ENCODE measurements at regions of chr19 and their contacts with region 1.

Region 1: DNA sequence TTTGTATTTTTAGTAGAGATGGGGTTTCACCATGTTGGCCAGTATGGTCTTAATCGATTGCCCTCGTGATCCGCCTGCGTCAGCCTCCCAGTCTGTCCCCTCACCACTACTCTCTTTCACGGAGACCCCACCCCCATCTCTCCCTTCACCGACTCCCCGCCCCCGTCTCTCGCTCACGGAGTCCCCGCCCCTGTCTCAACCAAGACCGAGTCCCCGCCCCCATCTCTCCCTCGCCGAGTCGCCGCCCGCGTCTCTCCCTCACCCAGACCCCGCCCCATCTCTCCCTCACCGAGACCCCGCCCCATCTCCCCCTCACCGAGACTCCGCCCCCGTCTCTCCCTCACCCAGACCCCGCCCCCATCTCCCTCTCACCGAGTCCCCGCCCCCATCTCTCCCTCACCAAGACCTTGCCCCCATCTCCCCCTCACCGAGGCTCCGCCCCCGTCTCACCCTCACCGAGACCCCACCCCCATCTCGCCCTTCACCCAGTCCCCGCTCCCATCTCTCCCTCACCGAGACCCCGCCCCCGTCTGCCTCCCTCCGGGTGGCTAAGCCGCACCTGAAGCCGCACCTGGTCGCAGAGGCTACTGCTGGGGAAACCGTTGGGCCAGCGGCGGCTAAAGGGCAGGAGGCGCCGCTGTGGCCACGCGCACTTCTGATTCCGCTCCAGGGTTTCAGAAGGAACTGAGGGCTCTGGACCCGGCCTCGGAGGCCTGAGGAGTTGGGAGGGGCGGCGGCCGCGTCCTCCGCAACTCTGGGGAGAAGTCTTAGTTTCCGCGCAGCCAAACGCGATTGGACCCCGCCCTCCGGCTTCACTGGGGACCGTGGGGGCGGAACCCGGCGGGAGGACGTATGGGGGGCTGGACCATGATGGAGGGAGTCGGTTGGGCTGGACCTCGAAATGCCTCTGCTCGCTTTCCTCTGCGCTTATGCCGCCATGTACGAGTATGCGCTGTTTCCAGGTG is 17.1 kb upstream of the ZNF846 start:
- DNase-seq: peak; percentile 92 to 96
- H3K4me3 ChIP-seq: peak overlapping the region; percentile 62
- H3K27ac ChIP-seq: peak overlapping the region; percentile 83
- H3K4me1 ChIP-seq: peaks cover 18% of the 10 kb centered on the region
- H3K27me3 ChIP-seq: no peaks in the 10 kb centered on the region
- CTCF ChIP-seq: no peak

Region 2: DNA sequence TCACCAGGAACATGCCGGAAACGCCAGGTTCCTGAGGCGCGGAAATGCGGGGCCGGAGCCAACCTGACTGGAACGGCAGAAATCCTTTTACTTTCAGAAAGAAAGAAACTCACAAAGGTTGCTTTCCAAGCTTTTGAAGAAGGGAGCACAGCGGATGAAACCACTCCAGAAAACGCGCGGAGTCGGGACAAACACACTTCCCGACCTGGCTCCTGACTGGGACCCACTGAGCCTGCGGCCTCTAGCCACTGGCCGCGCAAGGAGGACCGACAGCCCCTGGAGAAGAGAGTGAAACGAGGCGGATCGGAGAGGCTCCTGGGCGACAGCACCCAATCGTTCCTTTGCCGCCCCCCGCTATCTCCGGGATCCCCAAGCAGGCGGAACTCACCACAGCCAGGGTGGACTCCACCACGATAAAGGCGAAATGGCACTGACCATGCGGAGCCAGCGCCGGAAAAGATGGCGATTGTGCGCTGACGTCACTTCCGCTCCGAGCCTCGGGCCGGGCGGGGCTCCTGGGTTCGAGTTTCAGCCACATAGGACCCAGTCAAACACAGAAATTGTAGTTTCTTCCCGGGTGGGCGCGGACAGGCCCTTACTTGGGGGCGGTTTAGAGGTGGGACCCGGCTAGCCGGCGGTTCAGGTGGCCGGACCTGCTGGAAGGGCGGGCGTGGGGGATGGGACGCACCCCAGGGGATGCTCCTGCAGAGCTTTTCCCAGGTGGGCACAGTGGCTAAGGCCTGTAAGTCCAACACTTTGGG is 201.4 kb before region 1 on chr19 and contains the start of gene ZNF121:
- CTCF ChIA-PET with region 1: no interaction called
- POLR2A ChIA-PET with region 1: no interaction called
- intact Hi-C with region 1: loop called (anchors 1 kb)
- DNase-seq: peak; percentile 76
- H3K4me3 ChIP-seq: peak within 1 kb of the TSS; percentile 78
- H3K27ac ChIP-seq: peak within 1 kb of the TSS; percentile 76
- H3K4me1 ChIP-seq: 0 out of 2 replicates have a peak, but pooled peaks cover 5% of the 10 kb centered on the region
- H3K27me3 ChIP-seq: no peaks in the 10 kb centered on the region
- CTCF ChIP-seq: no peak
- total RNA-seq, gene ZNF121: 36.6 and 51.3 TPM in 2 replicates

Region 3: DNA sequence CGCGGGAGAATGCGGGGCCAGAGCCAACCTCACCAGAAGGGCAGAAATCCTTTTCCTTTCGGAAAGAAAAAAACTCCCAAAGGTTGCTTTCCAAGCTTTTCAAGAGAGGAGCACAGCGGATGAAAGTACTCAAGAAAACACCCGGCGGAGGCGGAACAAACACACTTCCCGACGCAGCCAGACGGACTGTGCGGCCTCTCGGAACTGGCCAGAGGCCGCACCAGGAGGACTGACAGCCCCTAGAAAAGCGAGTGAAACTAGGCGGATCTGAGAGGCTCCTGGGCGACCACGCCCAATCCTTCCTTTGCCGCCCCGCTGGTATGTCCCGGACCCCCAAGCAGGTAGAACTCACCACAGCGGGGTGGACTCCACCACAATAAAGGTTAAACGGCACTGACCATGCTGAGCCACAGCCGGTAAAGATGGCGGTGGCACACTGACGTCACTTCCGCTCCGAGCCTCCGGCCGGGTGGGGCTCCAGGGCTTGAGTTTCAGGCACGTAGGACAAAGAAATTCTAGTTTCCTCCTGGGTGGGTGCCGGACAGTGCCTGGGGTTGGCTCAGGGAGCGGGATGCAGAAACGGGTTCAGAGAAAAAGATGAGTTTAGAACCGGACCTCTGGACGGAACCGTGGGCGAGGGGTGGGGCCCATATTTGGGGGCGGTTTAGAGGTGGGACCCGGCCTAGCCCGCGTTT is 110.8 kb before region 1 on chr19 and contains the start of gene ZNF562:
- CTCF ChIA-PET with region 1: no interaction called
- POLR2A ChIA-PET with region 1: no interaction called
- intact Hi-C with region 1: loop called (anchors 2 kb)
- DNase-seq: peak; percentile 86 to 88
- H3K4me3 ChIP-seq: peak within 1 kb of the TSS; percentile 70
- H3K27ac ChIP-seq: peak within 1 kb of the TSS; percentile 86
- H3K4me1 ChIP-seq: no peaks in the 10 kb centered on the region
- H3K27me3 ChIP-seq: no peaks in the 10 kb centered on the region
- CTCF ChIP-seq: no peak
- total RNA-seq, gene ZNF562: 24.9 and 26.0 TPM in 2 replicates

Region 4: GRCh38 chr19:9768175-9769112 is 17.2 kb before region 1 on chr19 and contains the start of gene ZNF846:
- CTCF ChIA-PET with region 1: no interaction called
- POLR2A ChIA-PET with region 1: no interaction called
- intact Hi-C with region 1: loop called (anchors 2 kb)
- DNase-seq: peak; percentile 94 to 96
- H3K4me3 ChIP-seq: peak within 1 kb of the TSS; percentile 78
- H3K27ac ChIP-seq: peak within 1 kb of the TSS; percentile 76
- H3K4me1 ChIP-seq: peaks cover 5% of the 10 kb centered on the region; the same call in 1 of the 2 replicates
- H3K27me3 ChIP-seq: no peaks in the 10 kb centered on the region
- CTCF ChIP-seq: no peak
- total RNA-seq, gene ZNF846: 8.3 and 9.6 TPM in 2 replicates

Region 5: DNA sequence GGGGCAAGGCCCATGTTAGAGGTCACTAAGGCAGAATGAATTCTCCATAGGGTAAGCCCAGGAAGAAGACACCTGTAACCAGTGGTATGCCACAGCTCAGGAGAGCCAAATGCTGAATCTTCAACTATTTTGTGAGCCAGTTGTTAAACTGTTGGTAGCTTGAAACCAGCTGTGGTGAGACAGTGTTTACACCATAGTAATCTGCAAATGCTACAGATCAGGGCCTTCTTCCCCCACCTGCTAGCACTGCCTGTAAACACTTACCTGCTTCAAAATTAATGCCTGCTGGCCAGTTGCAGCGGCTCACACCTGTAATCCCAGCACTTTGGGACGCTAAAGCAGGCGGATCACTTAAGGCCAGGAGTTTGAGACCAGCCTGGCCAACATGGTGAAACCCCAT is 21.2 kb after region 1 on chr19:
- CTCF ChIA-PET with region 1: no interaction called
- POLR2A ChIA-PET with region 1: no interaction called
- intact Hi-C with region 1: no loop called
- DNase-seq: no peak
- H3K4me3 ChIP-seq: no peak overlapping the region
- H3K27ac ChIP-seq: no peak overlapping the region
- H3K4me1 ChIP-seq: no peaks in the 10 kb centered on the region
- H3K27me3 ChIP-seq: no peaks in the 10 kb centered on the region
- CTCF ChIP-seq: no peak

Region 6: DNA sequence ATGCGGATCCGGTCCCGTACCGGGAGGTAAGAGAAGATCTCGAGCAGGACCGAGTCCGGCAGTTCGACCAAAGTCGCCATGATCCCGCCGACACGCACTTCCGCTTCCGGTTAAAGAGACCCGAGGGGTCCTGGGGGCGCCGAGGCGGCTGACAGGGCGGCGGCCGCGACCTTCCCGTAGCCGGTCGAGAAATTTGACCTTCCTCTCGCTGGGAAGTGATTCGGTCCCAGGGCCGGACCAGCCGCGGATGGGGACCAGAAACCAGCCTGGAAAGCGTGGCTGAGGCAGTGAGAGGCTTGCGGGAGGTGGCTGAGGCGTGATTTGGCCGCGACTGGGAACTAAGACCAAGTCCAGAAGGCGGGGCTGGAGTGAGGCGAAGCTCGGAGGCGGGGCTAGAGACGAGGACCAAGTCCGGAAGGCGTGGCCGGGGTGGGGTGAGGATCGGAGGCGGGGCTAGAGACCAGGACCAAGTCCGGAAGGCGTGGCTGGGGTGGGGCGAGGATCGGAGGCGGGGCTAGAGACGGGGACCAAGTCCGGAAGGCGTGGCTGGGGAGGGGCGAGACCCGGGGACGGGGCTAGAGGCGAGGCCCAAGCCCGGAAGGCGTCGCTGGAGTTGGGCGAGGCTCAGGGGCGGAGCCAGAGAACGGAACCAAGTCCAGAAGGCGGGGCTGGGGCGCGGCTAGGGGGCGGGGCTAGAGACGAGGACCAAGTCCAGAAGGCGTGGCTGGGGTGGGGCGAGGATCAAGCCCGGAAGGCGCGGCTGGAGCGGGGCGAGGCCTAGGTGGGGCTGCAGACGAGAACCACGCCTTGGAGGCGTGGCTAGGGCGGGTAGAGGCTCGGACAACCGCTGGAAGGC is 33.3 kb after region 1 on chr19 and contains the start of gene FBXL12:
- CTCF ChIA-PET with region 1: no interaction called
- POLR2A ChIA-PET with region 1: no interaction called
- intact Hi-C with region 1: loop called (anchors 2 kb)
- DNase-seq: peak; percentile 98 to 100
- H3K4me3 ChIP-seq: peak within 1 kb of the TSS; percentile 93
- H3K27ac ChIP-seq: peak within 1 kb of the TSS; percentile 82
- H3K4me1 ChIP-seq: peaks cover 15% of the 10 kb centered on the region
- H3K27me3 ChIP-seq: no peaks in the 10 kb centered on the region
- CTCF ChIP-seq: no peak
- total RNA-seq, gene FBXL12: 30.7 and 35.8 TPM in 2 replicates

Region 7: GRCh38 chr19:10968527-10969135 is 1183.0 kb after region 1 on chr19:
- CTCF ChIA-PET with region 1: no interaction called
- POLR2A ChIA-PET with region 1: interaction called, 31 read pairs
- intact Hi-C with region 1: no loop called
- DNase-seq: no peak
- H3K4me3 ChIP-seq: no peak overlapping the region
- H3K27ac ChIP-seq: no peak overlapping the region
- H3K4me1 ChIP-seq: peaks cover 3% of the 10 kb centered on the region; the same call in 1 of the 2 replicates
- H3K27me3 ChIP-seq: no peaks in the 10 kb centered on the region
- CTCF ChIP-seq: no peak